Spleen (tissue), 13 donors: ENCODE measurements at regions of chr4 and their contacts with region 1.

Region 1: DNA sequence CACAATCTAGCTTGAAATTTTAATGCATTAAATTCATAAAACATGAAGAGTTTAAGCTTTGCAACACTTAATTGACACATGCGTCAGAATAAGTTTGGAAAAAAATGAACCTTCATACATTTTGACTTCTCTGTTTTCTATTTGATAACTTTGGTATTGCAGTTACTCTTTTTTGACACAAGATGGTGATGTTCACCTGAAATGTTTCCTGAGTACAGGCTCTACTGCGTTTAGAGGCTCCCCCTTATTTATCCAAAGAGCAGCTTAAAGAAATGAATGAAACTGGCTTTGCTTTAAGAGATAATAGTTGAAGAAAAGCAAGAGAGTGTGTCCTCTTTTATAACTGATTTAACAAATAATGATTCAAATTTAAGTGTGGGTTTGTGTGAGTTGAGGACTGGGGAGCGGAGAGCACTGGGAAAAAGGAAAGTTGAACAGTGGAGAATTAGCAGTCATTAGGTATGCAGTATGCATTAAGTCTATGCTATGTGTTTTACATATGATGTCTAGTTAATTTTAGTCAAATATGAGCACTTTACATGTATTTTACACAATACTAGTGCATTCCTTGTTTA is 180.6 kb upstream of the NUDT6 start:
- DNase-seq: no peak
- H3K4me3 ChIP-seq: no peak overlapping the region
- H3K27ac ChIP-seq: no peak overlapping the region
- H3K4me1 ChIP-seq: no peaks in the 10 kb centered on the region
- H3K27me3 ChIP-seq: no peaks in the 10 kb centered on the region
- CTCF ChIP-seq: peak; percentile 25 to 76 (median 66)
- POLR2A ChIP-seq: no peak

Region 2: DNA sequence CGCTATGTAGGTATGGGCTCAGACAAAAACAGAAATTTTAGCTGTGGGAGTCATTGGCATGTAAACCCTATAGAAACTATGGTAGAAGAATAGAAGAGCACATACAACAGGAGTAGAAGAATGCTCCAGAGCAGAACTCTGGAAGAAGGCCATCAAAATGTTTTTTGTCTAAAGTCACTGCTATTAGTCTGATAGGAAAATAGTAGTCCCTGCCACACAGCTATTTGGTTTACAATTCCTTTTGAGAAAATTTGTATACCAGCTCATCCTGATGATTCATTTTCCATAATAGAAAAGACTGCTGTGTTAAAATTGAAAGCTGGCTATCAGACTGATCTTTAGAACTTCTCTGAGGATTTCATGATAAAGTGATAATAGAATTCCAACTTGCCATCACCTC is 756.9 kb before region 1 on chr4:
- intact Hi-C with region 1: no loop called
- DNase-seq: no peak
- H3K4me3 ChIP-seq: no peak overlapping the region
- H3K27ac ChIP-seq: no peak overlapping the region
- H3K4me1 ChIP-seq: no peaks in the 10 kb centered on the region
- H3K27me3 ChIP-seq: no peaks in the 10 kb centered on the region
- CTCF ChIP-seq: no peak
- POLR2A ChIP-seq: no peak

Region 3: GRCh38 chr4:122602277-122603142 is 500.5 kb before region 1 on chr4:
- intact Hi-C with region 1: no loop called
- DNase-seq: no peak
- H3K4me3 ChIP-seq: no peak overlapping the region
- H3K27ac ChIP-seq: no peak overlapping the region
- H3K4me1 ChIP-seq: no peaks in the 10 kb centered on the region
- H3K27me3 ChIP-seq: peaks cover 0 to 36% (median 0%) of the 10 kb centered on the region in 7 donors
- CTCF ChIP-seq: peak in 3 of 11 experiments; percentile 25 to 35 (median 33)
- POLR2A ChIP-seq: no peak

Region 4: GRCh38 chr4:122865425-122865824 is 237.6 kb before region 1 on chr4:
- intact Hi-C with region 1: no loop called
- DNase-seq: no peak
- H3K4me3 ChIP-seq: no peak overlapping the region
- H3K27ac ChIP-seq: no peak overlapping the region
- H3K4me1 ChIP-seq: no peaks in the 10 kb centered on the region
- H3K27me3 ChIP-seq: peaks cover 0 to 4% (median 0%) of the 10 kb centered on the region in 7 donors
- CTCF ChIP-seq: no peak
- POLR2A ChIP-seq: no peak

Region 5: GRCh38 chr4:123034023-123034422 is 69.0 kb before region 1 on chr4:
- intact Hi-C with region 1: no loop called
- DNase-seq: no peak
- H3K4me3 ChIP-seq: no peak overlapping the region
- H3K27ac ChIP-seq: no peak overlapping the region
- H3K4me1 ChIP-seq: no peaks in the 10 kb centered on the region
- H3K27me3 ChIP-seq: no peaks in the 10 kb centered on the region
- CTCF ChIP-seq: no peak
- POLR2A ChIP-seq: no peak

Region 6: GRCh38 chr4:124262211-124263179 is 1159.5 kb after region 1 on chr4:
- intact Hi-C with region 1: loop called (anchors 5 kb)
- DNase-seq: no peak
- H3K4me3 ChIP-seq: no peak overlapping the region
- H3K27ac ChIP-seq: no peak overlapping the region
- H3K4me1 ChIP-seq: peaks cover 0 to 6% (median 0%) of the 10 kb centered on the region in 6 donors
- H3K27me3 ChIP-seq: no peaks in the 10 kb centered on the region
- CTCF ChIP-seq: peak; percentile 20 to 79 (median 67)
- POLR2A ChIP-seq: no peak